T-cell (primary cell): ENCODE measurements at regions of chr3 and their contacts with region 1.

Region 1: DNA sequence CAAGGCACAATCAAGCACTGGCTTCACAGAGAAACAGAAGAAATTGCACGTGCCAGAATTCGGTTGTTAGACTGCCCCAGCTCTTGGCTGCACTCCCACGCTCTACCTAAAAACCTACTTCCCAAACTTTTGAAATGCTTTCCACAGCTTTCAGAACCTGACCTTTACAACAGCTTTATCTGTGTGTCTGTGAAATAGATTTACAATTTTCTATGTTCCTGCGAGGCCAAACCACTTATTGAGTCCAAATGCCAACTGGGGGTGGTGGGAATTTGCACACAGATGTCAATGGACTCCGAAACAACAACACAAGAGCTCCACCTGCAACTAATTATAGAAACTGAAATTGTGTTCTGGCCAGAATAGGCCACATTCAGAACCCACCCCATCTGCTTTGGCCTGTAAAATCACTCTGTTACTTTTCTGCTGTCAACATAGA is 44.6 kb downstream of the ERC2 start:
- DNase-seq: no peak
- ATAC-seq: no peak
- H3K4me3 ChIP-seq: no peak overlapping the region
- H3K4me3 Mint-ChIP-seq: no peak overlapping the region
- H3K27ac ChIP-seq: no peak overlapping the region
- H3K27ac Mint-ChIP-seq: no peak overlapping the region
- H3K4me1 ChIP-seq: no peaks in the 10 kb centered on the region
- H3K4me1 Mint-ChIP-seq: no peaks in the 10 kb centered on the region
- H3K27me3 ChIP-seq: no peaks in the 10 kb centered on the region
- H3K27me3 Mint-ChIP-seq: peaks cover 14 to 31% of the 10 kb centered on the region in 2 donors

Region 2: DNA sequence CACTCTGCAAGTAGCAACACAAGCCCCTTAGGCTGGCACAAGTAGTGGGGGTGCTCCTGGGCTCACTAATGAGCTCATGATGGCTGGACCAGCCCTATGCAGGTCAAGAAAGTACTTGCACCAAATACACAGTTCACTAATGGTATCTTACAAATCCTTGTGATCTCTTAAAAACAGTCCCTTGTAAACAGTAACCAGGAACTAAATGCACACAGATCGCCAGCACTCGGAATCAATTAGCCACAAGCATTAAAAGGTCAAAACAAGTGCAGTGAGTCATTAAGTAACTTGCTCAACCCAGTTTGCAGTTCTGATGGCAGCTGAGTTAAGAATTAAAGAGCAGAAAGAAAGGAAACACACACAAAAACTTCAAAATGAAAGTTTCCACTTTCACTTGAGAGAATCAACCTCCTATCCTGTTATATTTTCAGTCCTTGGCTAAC is 334.9 kb after region 1 on chr3:
- CTCF ChIA-PET with region 1: no interaction called
- POLR2A ChIA-PET with region 1: interaction called in 1 of 2 experiments, 11 read pairs
- DNase-seq: peak in 4 of 35 experiments; percentile 5 to 44 (median 20)
- ATAC-seq: peak; percentile 38 to 67 (median 64)
- H3K4me3 ChIP-seq: no peak overlapping the region
- H3K4me3 Mint-ChIP-seq: peak overlapping the region; percentile 15 to 71 (median 57)
- H3K27ac ChIP-seq: peak overlapping the region; percentile 58
- H3K27ac Mint-ChIP-seq: peak overlapping the region; percentile 86 to 87
- H3K4me1 ChIP-seq: peaks cover 40 to 68% of the 10 kb centered on the region in 2 experiments
- H3K4me1 Mint-ChIP-seq: peaks cover 87 to 90% (median 88%) of the 10 kb centered on the region in 3 donors
- H3K27me3 ChIP-seq: no peaks in the 10 kb centered on the region
- H3K27me3 Mint-ChIP-seq: no peaks in the 10 kb centered on the region